Activated T-helper 1 cell treated with anti-CD3 and anti-CD28 coated beads, Interleukin-12 subunit alpha, Interleukin-12 subunit beta, Interleukin-2, Interleukin-4 antibody, amounts not matched to agents 30 ng/mL and 10 ng/mL and 1 ng/mL, durations not matched to agents 14 hours and 24 hours and 36 hours (primary cell): ENCODE measurements at regions of chr1 and their contacts with region 1.

Region 1: GRCh38 chr1:204989266-204990058 is 53.5 kb upstream of the CNTN2 start:
- DNase-seq: peak; percentile 44
- H3K4me3 Mint-ChIP-seq: no peak overlapping the region
- H3K27ac Mint-ChIP-seq: no peak overlapping the region
- H3K4me1 Mint-ChIP-seq: peaks cover 11% of the 10 kb centered on the region
- H3K27me3 Mint-ChIP-seq: peaks cover 2% of the 10 kb centered on the region

Region 2: GRCh38 chr1:204961765-204962419 is 27.6 kb before region 1 on chr1:
- intact Hi-C with region 1: no loop called
- DNase-seq: no peak
- H3K4me3 Mint-ChIP-seq: no peak overlapping the region
- H3K27ac Mint-ChIP-seq: no peak overlapping the region
- H3K4me1 Mint-ChIP-seq: no peaks in the 10 kb centered on the region
- H3K27me3 Mint-ChIP-seq: peaks cover 23% of the 10 kb centered on the region

Region 3: DNA sequence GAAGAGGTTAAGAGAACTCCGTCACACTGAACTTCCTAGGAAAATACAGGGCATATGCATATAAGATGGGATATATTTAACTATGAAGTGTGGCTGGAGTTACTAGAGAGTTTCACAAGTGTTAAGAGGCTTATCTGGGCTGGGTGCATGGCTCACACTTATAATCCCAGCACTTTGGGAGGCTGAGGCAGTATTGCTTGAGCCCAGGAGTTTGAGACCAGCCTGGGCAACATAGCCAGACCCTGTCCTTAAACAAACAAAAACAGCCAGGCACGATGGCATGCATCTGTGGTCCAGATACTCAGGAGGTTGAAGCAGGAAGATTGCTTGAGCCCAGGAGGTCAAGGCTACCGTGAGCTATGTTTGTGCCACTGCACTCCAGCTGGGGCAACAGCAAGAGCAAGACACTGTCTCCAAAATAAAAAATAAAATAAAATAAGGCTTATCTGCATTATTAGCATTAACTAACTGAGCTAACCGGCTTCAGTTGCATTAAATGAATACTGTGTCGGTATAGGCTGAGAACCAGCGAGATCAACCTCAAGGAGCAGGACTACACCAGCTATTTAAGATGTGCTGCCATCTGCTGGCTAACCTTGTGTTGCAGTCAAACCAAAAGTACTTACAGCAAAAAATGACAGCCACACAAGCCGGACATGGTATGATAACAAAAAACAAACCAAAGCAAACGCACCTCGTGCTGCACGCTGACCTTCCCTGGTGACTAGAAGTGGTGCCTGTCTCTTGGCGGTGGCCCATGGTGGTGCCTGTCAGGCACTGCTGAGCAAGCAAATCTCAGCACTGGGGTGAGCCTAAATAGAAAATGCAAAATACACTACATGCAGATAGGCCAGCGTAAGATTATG is 152.0 kb after region 1 on chr1:
- intact Hi-C with region 1: loop called (anchors 1 kb)
- DNase-seq: peak; percentile 59
- H3K4me3 Mint-ChIP-seq: no peak overlapping the region
- H3K27ac Mint-ChIP-seq: no peak overlapping the region
- H3K4me1 Mint-ChIP-seq: peaks cover 9% of the 10 kb centered on the region
- H3K27me3 Mint-ChIP-seq: no peaks in the 10 kb centered on the region

Region 4: DNA sequence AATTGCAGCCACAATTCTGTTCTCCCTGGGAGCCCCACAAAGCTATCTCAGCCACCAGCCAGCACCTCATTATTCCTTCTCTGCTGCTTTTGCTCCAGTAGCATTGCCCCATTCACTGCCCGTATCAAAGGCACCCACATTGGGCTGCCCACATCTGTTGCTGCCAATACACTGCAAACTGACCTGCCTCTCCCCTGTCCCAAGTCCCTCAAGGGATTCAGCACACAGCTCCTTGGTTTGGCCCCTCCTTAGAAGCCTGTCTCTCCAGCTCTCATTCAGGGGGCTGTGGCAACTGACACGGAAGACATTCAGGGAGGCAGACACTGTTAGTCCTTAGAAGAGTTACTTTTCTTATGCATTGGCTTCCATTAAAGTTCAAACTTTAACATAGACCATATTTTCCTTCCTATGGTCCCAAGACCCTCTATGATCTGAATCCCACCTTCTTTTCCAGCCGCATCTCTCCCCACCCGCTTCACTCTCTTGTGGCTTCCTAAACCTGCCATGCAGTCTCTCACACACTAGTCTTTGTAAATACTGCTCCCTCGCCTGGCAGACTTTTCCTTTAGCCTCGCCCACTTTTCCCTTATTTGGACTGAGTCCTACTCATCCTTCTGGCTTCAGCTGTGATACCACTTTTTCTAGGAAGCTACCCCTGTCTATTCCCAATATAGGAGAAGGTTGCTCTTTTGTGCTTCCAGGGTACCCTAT is 386.5 kb after region 1 on chr1:
- intact Hi-C with region 1: no loop called
- DNase-seq: no peak
- H3K4me3 Mint-ChIP-seq: no peak overlapping the region
- H3K27ac Mint-ChIP-seq: no peak overlapping the region
- H3K4me1 Mint-ChIP-seq: peaks cover 16% of the 10 kb centered on the region
- H3K27me3 Mint-ChIP-seq: peaks cover 39% of the 10 kb centered on the region